Activated naive CD4-positive, alpha-beta T cell treated with anti-CD3 and anti-CD28 coated beads for 36 hours (primary cell): ENCODE measurements at regions of chr13 and their contacts with region 1.

Region 1: GRCh38 chr13:75876360-75877050 is 240.4 kb downstream of the LMO7 start:
- DNase-seq: peak; percentile 76
- H3K4me3 Mint-ChIP-seq: no peak overlapping the region
- H3K27ac Mint-ChIP-seq: no peak overlapping the region
- H3K4me1 Mint-ChIP-seq: peaks cover 10% of the 10 kb centered on the region
- H3K27me3 Mint-ChIP-seq: no peaks in the 10 kb centered on the region

Region 2: DNA sequence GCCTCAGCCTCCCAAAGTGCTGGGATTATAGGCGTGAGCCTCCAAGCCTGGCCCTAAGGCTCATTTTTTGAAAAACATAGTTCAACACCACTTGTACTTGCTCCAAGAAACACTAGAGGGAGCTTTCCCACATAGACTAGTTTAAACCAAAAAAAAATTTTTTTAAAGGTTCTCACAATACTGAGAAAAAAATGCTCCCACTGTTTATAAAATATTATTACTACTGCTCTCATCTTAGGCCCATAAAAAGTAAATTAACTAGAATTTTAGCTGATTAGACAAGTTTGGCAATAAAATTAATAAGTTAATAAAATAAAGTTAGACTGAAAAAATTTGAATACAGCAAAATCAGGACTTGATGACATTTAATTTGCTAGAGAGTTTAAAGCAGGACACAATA is 504.0 kb before region 1 on chr13:
- CTCF ChIA-PET with region 1: no interaction called
- intact Hi-C with region 1: loop called (anchors 5 kb)
- DNase-seq: no peak
- H3K4me3 Mint-ChIP-seq: no peak overlapping the region
- H3K27ac Mint-ChIP-seq: no peak overlapping the region
- H3K4me1 Mint-ChIP-seq: peaks cover 5% of the 10 kb centered on the region
- H3K27me3 Mint-ChIP-seq: no peaks in the 10 kb centered on the region

Region 3: DNA sequence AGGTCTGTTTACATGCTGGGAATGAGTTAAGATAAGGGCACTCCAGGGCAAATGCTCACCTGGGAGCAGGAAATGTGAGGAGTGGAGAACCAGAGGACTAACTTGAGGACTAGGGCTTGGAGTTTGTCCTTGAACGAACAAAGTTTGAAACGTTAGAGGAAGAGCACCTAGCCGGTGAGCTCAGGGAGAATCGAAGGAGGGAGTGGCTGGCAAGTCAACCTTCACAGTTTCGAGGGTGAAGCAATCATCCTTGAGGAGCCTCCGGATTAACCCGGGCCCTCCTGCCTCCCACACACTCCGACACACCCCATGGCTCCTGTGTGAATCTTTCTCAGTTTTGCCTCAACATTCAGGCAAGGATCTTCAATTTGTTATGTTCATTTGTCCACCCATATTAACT is 181.8 kb before region 1 on chr13:
- CTCF ChIA-PET with region 1: interaction called, 90 read pairs
- intact Hi-C with region 1: no loop called
- DNase-seq: no peak
- H3K4me3 Mint-ChIP-seq: no peak overlapping the region
- H3K27ac Mint-ChIP-seq: no peak overlapping the region
- H3K4me1 Mint-ChIP-seq: peaks cover 4% of the 10 kb centered on the region
- H3K27me3 Mint-ChIP-seq: no peaks in the 10 kb centered on the region

Region 4: GRCh38 chr13:75803164-75803611 is 73.3 kb before region 1 on chr13:
- CTCF ChIA-PET with region 1: interaction called, 11 read pairs
- intact Hi-C with region 1: loop called (anchors 2 kb)
- DNase-seq: peak; percentile 44
- H3K4me3 Mint-ChIP-seq: peak overlapping the region; percentile 35
- H3K27ac Mint-ChIP-seq: peak overlapping the region; percentile 48
- H3K4me1 Mint-ChIP-seq: peaks cover 51% of the 10 kb centered on the region
- H3K27me3 Mint-ChIP-seq: no peaks in the 10 kb centered on the region

Region 5: GRCh38 chr13:76016799-76017400 is 140.4 kb after region 1 on chr13:
- CTCF ChIA-PET with region 1: interaction called, 18 read pairs
- intact Hi-C with region 1: loop called (anchors 1 kb)
- DNase-seq: peak; percentile 52
- H3K4me3 Mint-ChIP-seq: no peak overlapping the region
- H3K27ac Mint-ChIP-seq: no peak overlapping the region
- H3K4me1 Mint-ChIP-seq: no peaks in the 10 kb centered on the region
- H3K27me3 Mint-ChIP-seq: no peaks in the 10 kb centered on the region

Region 6: GRCh38 chr13:76067850-76068249 is 191.3 kb after region 1 on chr13:
- CTCF ChIA-PET with region 1: no interaction called
- intact Hi-C with region 1: no loop called
- DNase-seq: no peak
- H3K4me3 Mint-ChIP-seq: no peak overlapping the region
- H3K27ac Mint-ChIP-seq: no peak overlapping the region
- H3K4me1 Mint-ChIP-seq: no peaks in the 10 kb centered on the region
- H3K27me3 Mint-ChIP-seq: no peaks in the 10 kb centered on the region

Region 7: DNA sequence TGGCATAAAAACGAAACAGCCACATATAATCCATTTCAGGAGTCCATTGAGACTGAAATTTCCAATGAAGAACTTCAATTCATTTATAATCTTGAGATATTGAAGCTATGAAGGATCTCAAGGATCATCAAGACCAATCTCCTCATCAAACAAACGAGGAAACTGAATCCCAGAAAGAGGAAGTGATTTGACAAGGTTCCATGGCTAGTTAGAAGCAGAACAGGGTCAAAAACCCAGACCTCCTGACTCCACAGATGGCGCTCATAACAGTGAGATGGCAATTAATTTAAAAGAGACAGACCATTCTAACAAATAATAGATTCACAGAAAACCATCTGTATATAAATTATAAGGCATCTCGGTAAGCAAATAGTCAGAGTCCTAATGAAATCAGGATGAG is 780.0 kb after region 1 on chr13:
- CTCF ChIA-PET with region 1: no interaction called
- intact Hi-C with region 1: loop called (anchors 10 kb)
- DNase-seq: no peak
- H3K4me3 Mint-ChIP-seq: no peak overlapping the region
- H3K27ac Mint-ChIP-seq: no peak overlapping the region
- H3K4me1 Mint-ChIP-seq: no peaks in the 10 kb centered on the region
- H3K27me3 Mint-ChIP-seq: peaks cover 15% of the 10 kb centered on the region

Region 8: DNA sequence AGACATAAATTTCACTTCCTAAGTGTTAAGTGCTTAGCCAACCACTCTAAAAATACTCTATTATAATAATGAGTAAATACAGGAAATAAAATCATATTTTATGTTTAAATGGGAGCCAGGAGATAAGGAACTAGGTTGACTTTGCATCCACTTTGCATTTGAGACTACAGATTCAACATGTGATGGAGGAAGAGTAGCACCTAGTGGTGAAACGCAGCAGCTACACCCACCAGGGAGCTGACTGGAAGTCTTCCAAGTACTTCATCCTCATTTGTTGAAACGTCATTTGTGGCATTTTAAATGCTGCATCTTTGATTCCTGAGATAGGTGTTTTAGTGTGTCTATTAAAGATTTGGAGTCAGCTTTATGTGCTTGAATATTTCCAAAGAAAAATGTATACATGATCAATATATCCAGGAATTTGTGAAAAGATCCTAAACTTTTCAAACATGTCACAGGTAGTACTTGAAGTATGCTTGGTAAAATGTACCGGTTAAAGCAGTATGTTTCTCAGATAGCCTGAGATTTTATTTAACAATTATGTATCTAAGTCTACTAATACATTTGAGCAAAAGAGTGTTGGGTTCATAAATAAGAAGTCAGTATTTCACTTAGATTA is 1027.1 kb after region 1 on chr13:
- CTCF ChIA-PET with region 1: interaction called, 12 read pairs
- intact Hi-C with region 1: loop called (anchors 1 kb)
- DNase-seq: peak; percentile 81
- H3K4me3 Mint-ChIP-seq: no peak overlapping the region
- H3K27ac Mint-ChIP-seq: no peak overlapping the region
- H3K4me1 Mint-ChIP-seq: no peaks in the 10 kb centered on the region
- H3K27me3 Mint-ChIP-seq: peaks cover 10% of the 10 kb centered on the region